Activated naive CD4-positive, alpha-beta T cell treated with anti-CD3 and anti-CD28 coated beads for 36 hours (primary cell): ENCODE measurements at regions of chr16 and their contacts with region 1.

Region 1: DNA sequence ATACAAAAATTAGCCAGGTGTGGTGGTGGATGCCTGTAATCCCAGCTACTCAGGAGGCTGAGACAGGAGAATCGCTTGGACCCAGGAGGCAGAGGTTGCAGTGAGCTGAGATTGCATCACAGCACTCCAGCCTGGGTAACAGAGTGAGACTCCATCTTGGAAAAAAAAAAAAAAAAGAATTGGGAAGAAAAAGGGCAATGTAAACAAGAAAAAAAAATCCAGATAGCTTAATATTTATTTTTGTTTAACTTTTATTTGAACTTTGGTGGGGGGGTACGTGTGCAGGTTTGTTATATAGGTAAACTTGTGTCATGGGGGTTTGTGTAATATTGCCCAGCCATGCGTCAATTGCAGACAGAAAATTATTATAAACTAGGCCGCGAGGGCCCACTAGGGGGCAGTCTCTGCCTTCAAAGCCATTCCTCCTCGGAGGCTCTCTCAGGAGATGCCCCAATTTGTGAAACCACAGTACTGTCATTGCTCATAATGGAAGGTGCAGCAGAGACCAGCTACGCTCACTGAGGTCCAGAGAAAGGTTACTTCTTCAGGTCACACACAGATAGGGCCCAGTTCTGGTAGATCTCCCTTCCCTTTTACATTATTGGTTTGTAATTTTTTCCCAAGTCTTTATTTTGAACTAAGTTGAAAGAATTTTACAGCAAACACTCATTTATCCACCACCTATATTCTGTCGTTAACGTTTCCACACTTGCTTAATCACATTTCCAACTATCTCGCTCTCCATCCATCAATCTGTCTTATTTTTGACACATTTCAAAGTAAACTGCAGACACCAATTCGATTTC is 206.2 kb downstream of the PRKCB start:
- DNase-seq: peak; percentile 88
- H3K4me3 Mint-ChIP-seq: no peak overlapping the region
- H3K27ac Mint-ChIP-seq: no peak overlapping the region
- H3K4me1 Mint-ChIP-seq: peaks cover 4% of the 10 kb centered on the region
- H3K27me3 Mint-ChIP-seq: no peaks in the 10 kb centered on the region

Region 2: GRCh38 chr16:23976524-23976923 is 65.5 kb before region 1 on chr16:
- CTCF ChIA-PET with region 1: no interaction called
- intact Hi-C with region 1: no loop called
- DNase-seq: no peak
- H3K4me3 Mint-ChIP-seq: no peak overlapping the region
- H3K27ac Mint-ChIP-seq: no peak overlapping the region
- H3K4me1 Mint-ChIP-seq: peaks cover 38% of the 10 kb centered on the region
- H3K27me3 Mint-ChIP-seq: no peaks in the 10 kb centered on the region

Region 3: GRCh38 chr16:24499193-24499814 is 457.3 kb after region 1 on chr16:
- CTCF ChIA-PET with region 1: interaction called, 29 read pairs
- intact Hi-C with region 1: loop called (anchors 1 kb)
- DNase-seq: peak; percentile 55
- H3K4me3 Mint-ChIP-seq: no peak overlapping the region
- H3K27ac Mint-ChIP-seq: no peak overlapping the region
- H3K4me1 Mint-ChIP-seq: no peaks in the 10 kb centered on the region
- H3K27me3 Mint-ChIP-seq: peaks cover 3% of the 10 kb centered on the region